Endothelial cell of umbilical vein (primary cell): ENCODE measurements at regions of chr19 and their contacts with region 1.

Region 1: DNA sequence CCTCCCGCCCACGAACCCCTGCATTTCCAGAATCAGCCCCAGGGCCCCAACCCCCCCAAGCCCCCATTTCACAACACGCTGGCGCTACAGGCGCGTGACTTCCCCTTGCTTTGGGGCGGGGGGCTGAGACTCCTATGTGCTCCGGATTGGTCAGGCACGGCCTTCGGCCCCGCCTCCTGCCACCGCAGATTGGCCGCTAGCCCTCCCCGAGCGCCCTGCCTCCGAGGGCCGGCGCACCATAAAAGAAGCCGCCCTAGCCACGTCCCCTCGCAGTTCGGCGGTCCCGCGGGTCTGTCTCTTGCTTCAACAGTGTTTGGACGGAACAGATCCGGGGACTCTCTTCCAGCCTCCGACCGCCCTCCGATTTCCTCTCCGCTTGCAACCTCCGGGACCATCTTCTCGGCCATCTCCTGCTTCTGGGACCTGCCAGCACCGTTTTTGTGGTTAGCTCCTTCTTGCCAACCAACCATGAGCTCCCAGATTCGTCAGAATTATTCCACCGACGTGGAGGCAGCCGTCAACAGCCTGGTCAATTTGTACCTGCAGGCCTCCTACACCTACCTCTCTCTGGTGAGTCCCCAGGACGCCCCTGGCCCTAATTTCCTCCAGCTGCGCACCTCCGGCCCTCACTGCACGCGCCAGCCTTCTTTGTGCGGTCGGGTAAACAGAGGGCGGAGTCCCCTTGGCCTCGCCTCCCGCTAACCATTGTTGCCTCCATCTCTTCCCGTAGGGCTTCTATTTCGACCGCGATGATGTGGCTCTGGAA is at the start of gene FTL:
- DNase-seq: peak; percentile 96
- H3K4me3 ChIP-seq: peak within 1 kb of the TSS; percentile 35 to 79 (median 60)
- H3K27ac ChIP-seq: peak within 1 kb of the TSS; percentile 97
- H3K4me1 ChIP-seq: peaks cover 25% of the 10 kb centered on the region
- H3K27me3 ChIP-seq: no peaks in the 10 kb centered on the region
- CTCF ChIP-seq: no peak
- POLR2A ChIP-seq: peak; percentile 100
- total RNA-seq, gene FTL: 1,636 and 1,937 TPM in 2 replicates

Region 2: GRCh38 chr19:48835734-48836088 is 129.5 kb before region 1 on chr19:
- CTCF ChIA-PET with region 1: interaction called, 39 read pairs
- POLR2A ChIA-PET with region 1: no interaction called
- dilution Hi-C with region 1: no loop called
- intact Hi-C with region 1: loop called (anchors 1 kb)
- DNase-seq: peak; percentile 87
- H3K4me3 ChIP-seq: peak overlapping the region; percentile 38 to 61 (median 57)
- H3K27ac ChIP-seq: peak overlapping the region; percentile 52
- H3K4me1 ChIP-seq: peaks cover 5% of the 10 kb centered on the region
- H3K27me3 ChIP-seq: no peaks in the 10 kb centered on the region
- CTCF ChIP-seq: peak; percentile 88 to 92
- POLR2A ChIP-seq: no peak

Region 3: GRCh38 chr19:48872182-48872883 is 92.9 kb before region 1 on chr19 and contains the start of gene PPP1R15A:
- CTCF ChIA-PET with region 1: interaction called, 45 read pairs
- POLR2A ChIA-PET with region 1: interaction called, 14 read pairs
- dilution Hi-C with region 1: no loop called
- intact Hi-C with region 1: loop called (anchors 2 kb)
- DNase-seq: peak; percentile 100
- H3K4me3 ChIP-seq: peak within 1 kb of the TSS; percentile 93 to 100 (median 100)
- H3K27ac ChIP-seq: peak within 1 kb of the TSS; percentile 100
- H3K4me1 ChIP-seq: peaks cover 29% of the 10 kb centered on the region
- H3K27me3 ChIP-seq: no peaks in the 10 kb centered on the region
- CTCF ChIP-seq: no peak
- POLR2A ChIP-seq: peak; percentile 100
- total RNA-seq, gene PPP1R15A: 67.4 and 73.4 TPM in 2 replicates

Region 4: DNA sequence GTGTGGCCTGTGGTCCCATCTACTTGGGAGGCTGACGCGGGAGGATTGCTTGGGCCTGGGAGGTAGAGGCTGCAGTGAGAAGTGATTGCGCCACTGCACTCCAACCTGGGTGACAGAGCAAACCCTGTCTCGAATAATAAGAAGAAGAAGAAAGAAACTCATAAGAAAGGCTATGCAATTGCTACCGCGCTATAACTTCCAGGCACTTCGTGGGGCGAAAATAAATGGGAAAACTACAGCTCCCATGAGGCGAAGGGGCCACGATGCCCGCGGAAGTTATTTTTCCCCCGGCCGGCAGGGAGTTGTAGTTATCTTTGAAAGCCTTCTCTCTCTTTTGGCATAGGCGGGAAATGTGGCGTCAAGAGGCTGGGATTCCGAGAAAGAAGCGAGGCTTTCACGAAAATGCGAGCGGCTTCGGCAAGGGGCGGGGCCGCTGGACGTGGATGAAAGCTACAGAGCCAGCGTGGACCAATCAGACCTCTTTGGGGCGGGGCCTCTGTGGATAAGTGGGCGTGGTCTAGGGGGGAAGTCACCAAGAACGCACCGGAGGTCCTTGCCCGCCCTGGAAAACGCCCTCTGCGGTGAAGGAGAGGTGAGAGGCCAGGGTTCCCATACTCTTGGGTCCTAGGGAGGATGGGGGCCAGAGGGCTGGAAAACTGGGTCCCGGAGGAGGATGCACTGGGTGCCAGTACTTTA is 65.3 kb before region 1 on chr19 and contains the start of gene NUCB1:
- CTCF ChIA-PET with region 1: interaction called, 27 read pairs
- POLR2A ChIA-PET with region 1: interaction called, 3 read pairs
- dilution Hi-C with region 1: no loop called
- intact Hi-C with region 1: loop called (anchors 2 kb)
- DNase-seq: peak; percentile 99
- H3K4me3 ChIP-seq: peak within 1 kb of the TSS; percentile 62 to 84 (median 67)
- H3K27ac ChIP-seq: peak within 1 kb of the TSS; percentile 49
- H3K4me1 ChIP-seq: peaks cover 12% of the 10 kb centered on the region
- H3K27me3 ChIP-seq: peaks cover 2 to 7% of the 10 kb centered on the region in 2 experiments
- CTCF ChIP-seq: peak in 1 of 2 donors; percentile 33
- POLR2A ChIP-seq: peak; percentile 30
- total RNA-seq, gene NUCB1: 190 and 194 TPM in 2 replicates

Region 5: GRCh38 chr19:48954595-48955310 is 10.5 kb before region 1 on chr19 and contains the start of gene BAX:
- CTCF ChIA-PET with region 1: interaction called, 21 read pairs
- POLR2A ChIA-PET with region 1: interaction called, 4 read pairs
- dilution Hi-C with region 1: no loop called
- intact Hi-C with region 1: loop called (anchors 1 kb)
- DNase-seq: peak; percentile 98
- H3K4me3 ChIP-seq: peak within 1 kb of the TSS; percentile 53 to 99 (median 66)
- H3K27ac ChIP-seq: peak within 1 kb of the TSS; percentile 84
- H3K4me1 ChIP-seq: peaks cover 18% of the 10 kb centered on the region
- H3K27me3 ChIP-seq: no peaks in the 10 kb centered on the region
- CTCF ChIP-seq: no peak
- POLR2A ChIP-seq: peak; percentile 97
- total RNA-seq, gene BAX: 267 and 295 TPM in 2 replicates